ENCODE measurements at regions of chr6 and their contacts with region 1.

Region 1: DNA sequence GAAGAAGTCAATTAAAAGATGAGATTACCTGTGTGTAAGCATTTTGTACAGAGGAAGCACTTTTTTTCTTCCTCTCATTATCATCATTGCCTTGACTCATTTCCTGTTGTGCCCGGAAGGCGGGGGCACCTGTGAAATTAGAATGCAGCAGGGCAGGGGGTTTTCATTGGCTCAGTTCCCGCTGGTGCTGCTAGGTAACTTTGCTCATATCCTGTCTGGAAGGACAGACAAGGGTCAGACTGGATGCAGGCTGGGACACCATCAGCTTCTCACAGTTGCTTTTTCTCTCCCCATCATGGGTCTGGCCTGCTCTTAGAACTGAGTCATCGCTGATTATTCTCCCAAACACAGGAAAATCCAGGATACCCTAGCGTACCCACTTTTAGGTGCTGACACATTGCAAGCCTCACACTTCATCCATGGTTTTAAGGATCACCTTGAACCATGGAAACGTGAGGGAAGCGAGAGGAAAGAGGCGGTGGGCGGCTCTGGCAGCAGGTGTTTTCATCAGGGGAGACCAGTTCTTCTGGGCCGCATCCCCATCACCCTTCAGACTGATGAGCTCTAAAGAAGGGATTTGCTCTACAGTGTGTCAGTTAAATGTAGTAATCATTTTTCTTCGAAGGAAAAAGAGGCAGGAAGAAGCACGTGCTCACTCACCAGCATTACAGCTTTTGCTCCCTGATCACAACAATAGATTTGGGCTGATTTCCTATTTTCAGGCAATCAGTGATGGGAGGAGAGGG is 195.7 kb upstream of the SASH1 start:
- DNase-seq: peak; percentile 64
- H3K27ac ChIP-seq: peak overlapping the region; percentile 55
- CTCF ChIP-seq: no peak

Region 2: GRCh38 chr6:148166339-148166968 is 19.6 kb after region 1 on chr6:
- CTCF ChIA-PET with region 1: interaction called, 10 read pairs
- POLR2A ChIA-PET with region 1: no interaction called
- DNase-seq: peak; percentile 38
- H3K27ac ChIP-seq: no peak overlapping the region
- CTCF ChIP-seq: peak; percentile 73